ENCODE measurements at regions of chr4 and their contacts with region 1.

Region 1: GRCh38 chr4:1883583-1883982 is 12.4 kb downstream of the NSD2 start:
- DNase-seq: no peak
- ATAC-seq: no peak
- H3K4me3 ChIP-seq: no peak overlapping the region
- H3K27ac ChIP-seq: no peak overlapping the region
- H3K4me1 ChIP-seq: peaks cover 15% of the 10 kb centered on the region
- H3K27me3 ChIP-seq: no peaks in the 10 kb centered on the region
- CTCF ChIP-seq: no peak
- POLR2A ChIP-seq: no peak
- RAD21 ChIP-seq: no peak

Region 2: GRCh38 chr4:2177443-2178093 is 294.0 kb after region 1 on chr4:
- CTCF ChIA-PET with region 1: no interaction called
- POLR2A ChIA-PET with region 1: interaction called, 16 read pairs
- dilution Hi-C with region 1: no loop called
- in situ Hi-C with region 1: no loop called
- intact Hi-C with region 1: no loop called
- DNase-seq: no peak
- ATAC-seq: peak; percentile 17; the same call in 1 of the 2 replicates
- H3K4me3 ChIP-seq: no peak overlapping the region
- H3K27ac ChIP-seq: no peak overlapping the region
- H3K4me1 ChIP-seq: no peaks in the 10 kb centered on the region
- H3K27me3 ChIP-seq: no peaks in the 10 kb centered on the region
- CTCF ChIP-seq: no peak
- POLR2A ChIP-seq: no peak
- RAD21 ChIP-seq: no peak